A673 (cell line): ENCODE measurements at regions of chr1 and their contacts with region 1.

Region 1: DNA sequence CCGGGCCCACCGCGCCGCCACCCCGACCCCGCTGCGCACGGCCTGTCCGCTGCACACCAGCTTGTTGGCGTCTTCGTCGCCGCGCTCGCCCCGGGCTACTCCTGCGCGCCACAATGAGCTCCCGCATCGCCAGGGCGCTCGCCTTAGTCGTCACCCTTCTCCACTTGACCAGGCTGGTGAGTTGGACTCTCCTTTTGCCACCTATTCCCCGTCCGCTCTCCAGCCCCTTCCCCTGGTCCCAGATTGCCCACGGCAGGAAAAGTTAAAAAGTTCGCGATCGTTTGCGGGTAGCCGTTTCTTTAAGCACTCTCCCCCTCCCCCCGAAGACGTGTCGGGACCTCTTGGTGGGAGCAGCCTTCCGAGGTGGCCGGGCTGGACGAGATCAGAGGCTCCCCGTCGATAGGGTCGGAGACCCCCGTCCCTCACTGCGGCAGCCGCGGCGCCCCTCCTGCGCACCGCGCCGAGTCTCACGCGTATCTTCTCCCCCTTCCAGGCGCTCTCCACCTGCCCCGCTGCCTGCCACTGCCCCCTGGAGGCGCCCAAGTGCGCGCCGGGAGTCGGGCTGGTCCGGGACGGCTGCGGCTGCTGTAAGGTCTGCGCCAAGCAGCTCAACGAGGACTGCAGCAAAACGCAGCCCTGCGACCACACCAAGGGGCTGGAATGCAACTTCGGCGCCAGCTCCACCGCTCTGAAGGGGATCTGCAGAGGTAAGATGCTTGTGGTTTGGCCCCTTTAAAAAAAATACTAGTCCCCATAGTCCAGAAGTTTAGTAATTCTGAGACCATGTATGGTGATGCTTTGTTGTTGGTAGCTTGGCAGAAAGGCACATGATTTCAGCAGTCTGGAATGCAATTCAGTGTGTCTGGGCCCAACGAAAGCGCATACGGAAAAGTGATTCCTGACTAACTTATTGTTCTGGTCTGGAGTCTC is 576 bp downstream of the CCN1 start:
- DNase-seq: peak; percentile 91
- H3K4me3 ChIP-seq: peak overlapping the region; percentile 83
- H3K27ac ChIP-seq: peak overlapping the region; percentile 98
- H3K4me1 ChIP-seq: peaks cover 46% of the 10 kb centered on the region
- H3K27me3 ChIP-seq: no peaks in the 10 kb centered on the region
- CTCF ChIP-seq: peak; percentile 86

Region 2: DNA sequence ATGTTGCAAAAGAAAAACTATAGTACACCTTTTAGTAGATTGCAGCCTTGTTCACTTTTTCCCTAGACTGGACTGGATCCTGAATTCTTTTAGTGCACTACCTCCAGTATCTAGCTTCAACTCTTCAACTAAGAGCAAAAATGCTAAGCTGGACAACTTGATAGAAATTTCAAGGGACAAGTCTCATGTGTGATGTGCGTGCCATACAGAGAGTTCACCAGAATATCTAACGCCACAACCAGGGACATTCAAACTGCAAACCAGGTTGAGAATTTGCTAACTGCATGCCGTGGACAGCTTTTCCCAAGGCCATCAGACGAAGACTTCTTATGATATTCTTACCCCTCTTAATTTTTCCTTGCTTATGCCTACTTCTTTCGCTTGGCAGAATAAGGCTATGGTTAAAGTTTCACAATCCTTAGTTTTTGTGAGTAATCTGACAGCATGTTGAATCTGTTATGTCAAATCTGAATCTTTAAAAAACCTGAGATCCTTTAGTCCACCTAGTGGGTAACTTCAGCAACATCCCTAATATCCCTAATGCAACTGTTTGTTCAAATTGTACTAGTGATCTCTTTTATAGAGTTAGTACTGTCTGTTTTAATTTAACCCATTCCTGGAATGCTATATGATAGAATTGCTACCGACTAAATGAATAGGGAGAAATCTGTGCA is 182.6 kb before region 1 on chr1:
- CTCF ChIA-PET with region 1: no interaction called
- POLR2A ChIA-PET with region 1: no interaction called
- intact Hi-C with region 1: loop called (anchors 5 kb)
- DNase-seq: peak; percentile 72
- H3K4me3 ChIP-seq: no peak overlapping the region
- H3K27ac ChIP-seq: peak overlapping the region; percentile 48
- H3K4me1 ChIP-seq: peaks cover 31% of the 10 kb centered on the region
- H3K27me3 ChIP-seq: no peaks in the 10 kb centered on the region
- CTCF ChIP-seq: peak; percentile 65

Region 3: GRCh38 chr1:85484264-85484663 is 96.9 kb before region 1 on chr1:
- CTCF ChIA-PET with region 1: no interaction called
- POLR2A ChIA-PET with region 1: no interaction called
- intact Hi-C with region 1: no loop called
- DNase-seq: no peak
- H3K4me3 ChIP-seq: no peak overlapping the region
- H3K27ac ChIP-seq: no peak overlapping the region
- H3K4me1 ChIP-seq: no peaks in the 10 kb centered on the region
- H3K27me3 ChIP-seq: no peaks in the 10 kb centered on the region
- CTCF ChIP-seq: no peak

Region 4: DNA sequence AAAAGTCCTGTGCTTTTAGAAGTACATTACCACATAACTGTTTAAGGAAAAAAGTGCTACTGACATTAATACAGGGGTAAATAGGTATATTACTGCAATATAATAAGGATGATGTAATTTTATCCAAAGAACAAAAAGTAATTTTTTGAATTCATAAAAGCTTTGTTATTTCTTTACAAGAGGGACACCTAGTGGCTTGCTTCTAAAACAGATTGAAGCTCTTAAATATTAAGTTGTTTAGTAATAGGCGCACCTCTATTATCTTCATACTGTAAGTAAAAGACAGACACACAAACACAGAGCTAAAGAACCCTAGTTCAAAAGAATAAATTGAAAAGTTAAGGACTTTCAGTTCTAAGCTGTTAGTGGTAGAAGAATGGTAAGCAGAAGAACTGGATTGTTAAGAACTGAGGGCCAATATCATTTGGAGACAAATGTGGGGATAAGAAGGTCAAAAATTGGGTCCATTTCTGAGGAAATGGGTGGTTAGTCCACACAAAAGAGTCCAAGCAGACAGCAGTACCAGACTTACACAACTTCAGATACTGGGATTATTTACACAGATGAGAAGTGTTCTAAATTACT is 111.7 kb after region 1 on chr1:
- CTCF ChIA-PET with region 1: interaction called, 7 read pairs
- POLR2A ChIA-PET with region 1: interaction called, 4 read pairs
- intact Hi-C with region 1: loop called (anchors 5 kb)
- DNase-seq: peak; percentile 47
- H3K4me3 ChIP-seq: no peak overlapping the region
- H3K27ac ChIP-seq: no peak overlapping the region
- H3K4me1 ChIP-seq: peaks cover 4% of the 10 kb centered on the region
- H3K27me3 ChIP-seq: no peaks in the 10 kb centered on the region
- CTCF ChIP-seq: peak; percentile 68

Region 5: DNA sequence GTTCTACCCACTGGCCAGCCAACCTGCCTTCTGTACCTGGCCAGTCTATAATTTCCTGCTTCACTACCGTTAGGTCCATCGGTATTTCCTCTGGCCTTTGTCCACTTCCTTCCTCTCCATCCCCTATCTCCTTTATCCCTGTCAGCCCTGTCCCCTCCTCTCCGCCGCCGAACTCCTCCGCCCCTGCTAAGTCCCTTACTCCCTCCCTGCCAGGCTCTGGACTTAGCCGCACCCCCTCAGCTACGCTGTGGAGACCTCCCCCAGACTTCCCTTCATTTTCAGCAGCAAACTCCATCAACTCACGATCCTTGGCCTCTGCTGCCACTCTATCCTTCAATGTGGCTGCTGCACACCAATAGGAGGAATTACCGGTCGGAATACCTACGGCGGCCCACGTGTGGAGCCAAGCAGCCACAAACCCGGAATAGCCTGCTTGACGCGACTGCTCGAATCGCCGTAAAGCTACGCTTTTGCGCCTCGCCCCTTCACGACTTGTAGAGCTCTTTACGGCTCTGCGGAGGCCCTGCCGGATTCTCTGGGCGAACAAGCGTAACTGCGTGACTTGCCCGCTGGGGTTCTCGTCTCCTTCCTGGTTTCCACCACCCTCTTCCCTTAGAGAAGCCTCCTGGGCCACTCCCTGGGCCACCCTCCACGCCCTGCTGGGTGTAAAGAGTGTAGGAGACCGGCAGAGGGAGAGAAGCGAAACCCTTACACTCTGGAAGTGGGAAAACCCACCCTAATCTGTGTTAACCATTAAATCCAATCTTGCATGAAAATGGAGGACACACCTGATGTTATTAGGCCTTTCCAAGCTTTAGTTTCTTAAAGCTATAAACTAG is 127.1 kb after region 1 on chr1 and contains the start of gene ZNHIT6:
- CTCF ChIA-PET with region 1: no interaction called
- POLR2A ChIA-PET with region 1: no interaction called
- intact Hi-C with region 1: loop called (anchors 1 kb)
- DNase-seq: peak; percentile 98
- H3K4me3 ChIP-seq: peak within 1 kb of the TSS; percentile 90
- H3K27ac ChIP-seq: peak within 1 kb of the TSS; percentile 75
- H3K4me1 ChIP-seq: peaks cover 10% of the 10 kb centered on the region
- H3K27me3 ChIP-seq: no peaks in the 10 kb centered on the region
- CTCF ChIP-seq: peak; percentile 48
- total RNA-seq, gene ZNHIT6: 31.5 and 37.6 TPM in 2 replicates